Activated CD4-positive, alpha-beta T cell treated with anti-CD3 and anti-CD28 coated beads for 36 hours (primary cell): ENCODE measurements at regions of chr19 and their contacts with region 1.

Region 1: DNA sequence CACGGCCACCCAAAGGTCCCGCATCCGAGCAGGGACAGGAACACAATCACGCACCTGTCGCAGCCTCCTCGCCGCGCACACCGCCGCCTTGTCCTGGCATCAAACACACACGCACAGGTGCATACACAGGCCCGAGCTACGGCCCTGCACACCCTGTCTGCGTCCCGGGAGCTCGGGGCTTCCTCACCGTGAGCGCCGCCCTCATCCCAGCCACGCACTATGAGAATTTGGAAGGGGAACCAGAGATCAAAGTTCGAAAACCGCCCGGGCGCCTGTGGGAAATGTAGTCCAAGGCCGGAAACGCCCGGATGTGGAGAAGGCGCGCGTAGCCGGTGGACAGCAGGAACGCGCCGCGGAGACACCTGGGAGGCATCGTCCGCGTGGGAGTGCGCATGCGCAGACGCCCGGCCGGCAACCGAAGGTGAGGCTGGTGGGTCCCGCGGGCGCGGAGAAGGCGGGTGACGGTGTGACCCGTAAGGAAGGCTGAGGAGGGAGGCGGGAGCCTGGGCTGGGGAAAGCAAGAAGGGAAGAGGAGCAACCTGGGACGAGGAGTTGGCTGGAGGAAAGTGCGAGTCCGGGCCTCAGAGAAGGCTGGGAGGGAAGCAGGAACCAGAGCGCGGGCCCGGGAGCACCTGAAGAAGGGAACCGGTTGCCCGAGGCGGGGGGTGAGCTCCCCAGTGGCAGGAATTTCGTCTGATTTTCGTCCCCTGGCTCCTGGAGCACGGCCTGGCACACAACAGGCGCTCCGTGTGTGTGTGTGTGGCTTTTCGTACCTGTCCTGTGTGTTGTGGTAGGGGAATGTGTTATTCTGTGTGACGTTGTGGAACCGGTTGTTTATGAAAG is at the start of gene ZNF567:
- DNase-seq: peak; percentile 99
- ATAC-seq: peak; percentile 93
- H3K4me3 Mint-ChIP-seq: peak within 1 kb of the TSS; percentile 99
- H3K27ac Mint-ChIP-seq: peak within 1 kb of the TSS; percentile 96
- H3K4me1 Mint-ChIP-seq: peaks cover 27% of the 10 kb centered on the region
- H3K27me3 Mint-ChIP-seq: no peaks in the 10 kb centered on the region
- total RNA-seq, gene ZNF567: 7.4 to 8.6 TPM

Region 2: DNA sequence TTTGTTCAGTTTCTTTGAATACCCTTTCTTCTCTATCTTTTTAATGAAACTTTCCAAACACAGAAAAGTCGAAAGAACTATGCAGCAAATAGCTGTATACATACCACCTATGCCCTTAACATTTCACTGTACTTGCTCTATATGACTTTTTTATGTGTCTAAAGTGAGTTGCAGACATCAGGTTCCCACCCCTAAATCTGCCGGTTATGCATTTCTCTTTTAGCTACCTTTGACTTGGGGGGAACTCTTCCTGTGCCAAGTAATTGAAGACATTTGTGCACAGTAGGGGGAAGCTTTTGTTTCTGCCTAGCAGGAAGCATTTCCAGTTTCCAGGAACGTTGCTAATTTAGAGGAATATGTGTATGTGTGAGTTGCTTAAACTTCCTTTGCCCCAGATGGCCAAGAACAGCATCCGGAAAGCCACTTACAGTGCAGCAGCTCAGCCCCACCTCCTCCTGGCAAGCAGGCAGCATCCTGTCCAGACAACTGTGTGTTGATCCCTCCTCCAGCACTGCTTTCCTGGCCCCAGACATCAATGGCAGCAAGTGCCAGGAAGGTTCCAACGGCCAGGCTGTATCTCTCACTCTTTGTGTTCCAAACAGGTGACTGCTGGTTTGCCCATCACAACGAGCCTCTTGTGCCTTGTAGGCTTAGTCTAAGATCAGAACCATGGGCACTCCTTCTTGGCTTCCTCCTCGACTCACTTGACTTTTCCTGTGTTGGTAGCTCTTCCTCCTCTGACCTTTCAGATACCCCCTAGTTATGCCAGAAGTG is 1702.0 kb before region 1 on chr19:
- CTCF ChIA-PET with region 1: no interaction called
- POLR2A ChIA-PET with region 1: no interaction called
- intact Hi-C with region 1: no loop called
- DNase-seq: peak; percentile 55
- ATAC-seq: peak; percentile 52
- H3K4me3 Mint-ChIP-seq: peak overlapping the region; percentile 48
- H3K27ac Mint-ChIP-seq: peak overlapping the region; percentile 86
- H3K4me1 Mint-ChIP-seq: peaks cover 38% of the 10 kb centered on the region
- H3K27me3 Mint-ChIP-seq: no peaks in the 10 kb centered on the region

Region 3: GRCh38 chr19:35719402-35720162 is 967.9 kb before region 1 on chr19:
- CTCF ChIA-PET with region 1: no interaction called
- POLR2A ChIA-PET with region 1: no interaction called
- intact Hi-C with region 1: no loop called
- DNase-seq: no peak
- ATAC-seq: no peak
- H3K4me3 Mint-ChIP-seq: peak overlapping the region; percentile 88
- H3K27ac Mint-ChIP-seq: peak overlapping the region; percentile 92
- H3K4me1 Mint-ChIP-seq: peaks cover 24% of the 10 kb centered on the region
- H3K27me3 Mint-ChIP-seq: no peaks in the 10 kb centered on the region

Region 4: GRCh38 chr19:36528194-36528920 is 159.1 kb before region 1 on chr19 and contains the start of gene ZNF260:
- CTCF ChIA-PET with region 1: no interaction called
- POLR2A ChIA-PET with region 1: no interaction called
- intact Hi-C with region 1: loop called (anchors 1 kb)
- DNase-seq: peak; percentile 97
- ATAC-seq: peak; percentile 91
- H3K4me3 Mint-ChIP-seq: peak within 1 kb of the TSS; percentile 87
- H3K27ac Mint-ChIP-seq: peak within 1 kb of the TSS; percentile 96
- H3K4me1 Mint-ChIP-seq: peaks cover 14% of the 10 kb centered on the region
- H3K27me3 Mint-ChIP-seq: no peaks in the 10 kb centered on the region
- total RNA-seq, gene ZNF260: 5.7 to 8.2 TPM

Region 5: DNA sequence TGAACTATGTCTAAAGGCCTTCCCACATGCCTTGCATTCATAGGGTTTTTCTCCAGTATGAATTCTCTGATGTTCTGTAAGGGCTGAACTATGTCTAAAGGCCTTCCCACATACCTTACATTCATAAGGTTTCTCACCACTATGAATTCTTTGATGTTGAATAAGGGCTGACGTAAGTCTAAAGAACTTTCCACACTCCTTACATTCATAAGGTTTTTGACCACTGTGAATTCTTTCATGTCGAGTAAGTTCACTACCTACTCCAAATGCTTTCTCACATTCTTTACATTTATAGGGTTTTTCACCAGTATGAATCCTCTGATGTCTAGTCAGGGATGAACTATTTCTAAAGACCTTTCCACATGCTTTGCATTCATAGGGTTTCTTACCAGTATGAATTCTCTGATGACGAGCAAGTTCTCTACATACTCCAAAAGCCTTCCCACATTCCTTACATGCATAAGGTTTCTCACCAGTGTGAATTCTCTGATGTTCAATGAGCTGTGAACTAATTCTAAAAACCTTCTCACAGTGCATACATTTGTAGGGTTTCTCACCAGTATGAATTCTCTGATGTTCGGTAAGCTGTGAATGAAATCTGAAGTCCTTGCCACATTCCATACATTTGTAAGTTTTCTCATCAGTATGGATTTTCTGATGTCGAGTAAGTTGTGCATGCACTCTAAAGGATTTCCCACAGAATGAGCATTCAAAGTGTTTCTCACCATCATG is 140.3 kb before region 1 on chr19:
- CTCF ChIA-PET with region 1: no interaction called
- POLR2A ChIA-PET with region 1: no interaction called
- intact Hi-C with region 1: no loop called
- DNase-seq: no peak
- ATAC-seq: no peak
- H3K4me3 Mint-ChIP-seq: no peak overlapping the region
- H3K27ac Mint-ChIP-seq: no peak overlapping the region
- H3K4me1 Mint-ChIP-seq: no peaks in the 10 kb centered on the region
- H3K27me3 Mint-ChIP-seq: no peaks in the 10 kb centered on the region

Region 6: DNA sequence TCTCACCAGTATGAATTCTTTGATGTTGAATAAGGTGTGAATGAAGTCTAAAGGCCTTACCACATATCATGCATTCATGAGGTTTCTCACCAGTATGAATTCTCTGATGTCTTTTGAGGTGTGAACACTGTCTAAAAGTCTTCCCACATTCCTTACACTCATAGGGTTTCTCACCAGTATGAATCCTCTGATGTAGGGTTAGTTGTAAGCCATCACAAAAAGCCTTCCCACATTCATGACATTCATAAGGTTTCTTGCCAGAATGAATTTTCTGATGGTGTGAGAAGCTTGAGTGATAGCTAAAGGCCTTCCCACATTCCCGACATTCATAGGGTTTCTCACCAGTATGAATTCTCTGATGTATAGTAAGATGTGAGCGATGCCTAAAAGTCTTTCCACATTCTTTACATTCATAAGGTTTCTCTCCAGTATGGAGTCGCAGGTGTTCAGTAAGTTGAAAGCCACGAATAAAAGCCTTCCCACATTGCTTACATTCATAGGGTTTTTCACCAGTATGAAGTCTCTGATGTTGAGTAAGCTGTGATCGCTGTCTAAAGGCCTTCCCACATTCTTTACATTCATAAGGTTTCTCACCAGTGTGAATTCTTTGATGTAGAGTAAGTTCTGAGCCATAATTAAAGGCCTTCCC is 48.4 kb before region 1 on chr19:
- CTCF ChIA-PET with region 1: no interaction called
- POLR2A ChIA-PET with region 1: no interaction called
- intact Hi-C with region 1: no loop called
- DNase-seq: no peak
- ATAC-seq: no peak
- H3K4me3 Mint-ChIP-seq: no peak overlapping the region
- H3K27ac Mint-ChIP-seq: no peak overlapping the region
- H3K4me1 Mint-ChIP-seq: no peaks in the 10 kb centered on the region
- H3K27me3 Mint-ChIP-seq: no peaks in the 10 kb centered on the region

Region 7: GRCh38 chr19:36665832-36666231 is 21.6 kb before region 1 on chr19:
- CTCF ChIA-PET with region 1: no interaction called
- POLR2A ChIA-PET with region 1: no interaction called
- intact Hi-C with region 1: loop called (anchors 1 to 2 kb)
- DNase-seq: no peak
- ATAC-seq: no peak
- H3K4me3 Mint-ChIP-seq: peak overlapping the region; percentile 98
- H3K27ac Mint-ChIP-seq: peak overlapping the region; percentile 99
- H3K4me1 Mint-ChIP-seq: peaks cover 26% of the 10 kb centered on the region
- H3K27me3 Mint-ChIP-seq: no peaks in the 10 kb centered on the region

Region 8: DNA sequence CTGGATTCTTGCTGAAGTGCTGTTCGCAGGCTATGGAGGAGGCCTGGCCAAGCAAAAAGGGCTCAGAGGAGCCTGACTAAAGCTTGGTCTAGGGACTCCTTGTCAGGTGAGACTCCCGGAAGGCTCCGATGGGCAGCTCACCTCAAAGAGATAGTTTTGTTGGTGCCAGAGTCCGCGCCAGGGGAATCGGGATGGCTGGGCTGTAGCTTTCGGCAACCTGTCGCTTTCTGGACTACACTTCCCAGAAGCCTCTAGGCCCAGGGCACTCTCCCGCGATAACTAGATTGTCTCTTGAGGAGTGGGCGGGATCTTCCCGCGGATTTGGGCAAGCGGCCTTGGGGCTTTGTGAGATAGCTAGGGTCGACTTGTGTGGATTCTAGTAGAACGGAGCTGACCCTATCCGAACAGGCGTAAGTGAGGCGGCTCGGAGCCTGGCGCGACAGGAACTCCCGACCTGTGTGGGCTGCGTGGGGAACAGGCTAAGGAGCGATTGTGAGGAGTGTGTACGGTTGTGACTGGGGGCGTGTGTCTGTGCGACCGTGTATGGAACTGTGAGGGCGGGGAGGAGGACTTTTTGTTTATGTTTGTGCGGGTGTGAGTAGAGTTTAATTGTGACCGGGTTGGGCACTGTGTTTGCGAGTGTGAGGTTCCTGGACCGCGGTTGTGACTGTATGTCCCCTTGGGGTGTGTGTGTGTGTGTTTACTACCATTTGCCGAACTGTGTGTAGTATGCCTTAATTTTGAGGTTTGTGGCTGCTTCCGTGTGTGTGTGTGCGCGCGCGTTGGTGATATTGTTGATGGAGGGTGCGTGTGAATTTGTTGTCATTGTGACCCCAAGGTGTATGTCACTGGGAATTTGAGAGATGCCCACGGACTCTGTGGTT is 163.4 kb after region 1 on chr19 and contains the start of gene ZNF345:
- CTCF ChIA-PET with region 1: no interaction called
- POLR2A ChIA-PET with region 1: no interaction called
- intact Hi-C with region 1: loop called (anchors 1 kb)
- DNase-seq: peak; percentile 91
- ATAC-seq: peak; percentile 82
- H3K4me3 Mint-ChIP-seq: no peak within 1 kb of the TSS
- H3K27ac Mint-ChIP-seq: no peak within 1 kb of the TSS
- H3K4me1 Mint-ChIP-seq: peaks cover 10% of the 10 kb centered on the region
- H3K27me3 Mint-ChIP-seq: no peaks in the 10 kb centered on the region
- total RNA-seq, gene ZNF345: 3.5 to 4.6 TPM

Region 9: DNA sequence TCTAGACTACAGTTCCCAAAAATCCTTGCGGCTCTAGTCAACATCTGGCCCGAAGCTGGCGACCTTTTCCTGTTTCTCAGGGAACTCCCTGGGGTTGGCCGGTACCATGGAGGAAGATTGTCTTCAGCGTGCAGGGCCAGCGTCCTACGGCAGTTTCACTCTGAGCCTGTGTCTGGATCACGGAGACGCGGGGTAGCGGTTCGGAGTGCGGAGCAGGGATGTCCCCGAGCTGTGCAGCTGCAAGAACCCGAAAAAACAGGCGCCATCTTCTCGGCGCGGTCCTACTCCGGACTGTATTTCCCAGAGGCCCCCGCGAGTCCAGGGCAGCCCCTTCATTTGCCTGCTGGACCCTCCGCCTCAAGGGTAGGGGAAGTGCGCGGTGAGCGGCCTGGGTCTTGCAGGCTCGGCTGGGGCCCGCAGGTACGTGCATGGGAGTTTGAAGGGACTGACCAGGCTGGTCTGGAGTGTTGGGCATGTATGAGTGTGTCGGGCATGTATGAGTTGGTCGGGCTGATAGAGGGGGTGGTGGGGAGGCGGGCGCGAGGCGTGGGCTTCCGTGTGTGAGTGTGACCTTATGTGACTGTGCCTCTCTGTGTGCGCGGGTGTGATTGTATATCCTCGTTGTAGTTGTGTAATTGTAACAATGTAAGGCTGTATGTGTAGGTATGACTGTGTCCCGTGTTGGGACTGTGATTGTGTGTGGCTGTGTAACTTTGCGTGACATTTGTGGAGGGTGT is 530.6 kb after region 1 on chr19 and contains the start of gene ZNF383:
- CTCF ChIA-PET with region 1: no interaction called
- POLR2A ChIA-PET with region 1: no interaction called
- intact Hi-C with region 1: loop called in 1 of 2 experiments (anchors 2 kb)
- DNase-seq: peak; percentile 89
- ATAC-seq: peak; percentile 87
- H3K4me3 Mint-ChIP-seq: peak within 1 kb of the TSS; percentile 93
- H3K27ac Mint-ChIP-seq: peak within 1 kb of the TSS; percentile 99
- H3K4me1 Mint-ChIP-seq: peaks cover 24% of the 10 kb centered on the region
- H3K27me3 Mint-ChIP-seq: no peaks in the 10 kb centered on the region
- total RNA-seq, gene ZNF383: 8.5 to 9.2 TPM